Activated T-helper 1 cell treated with anti-CD3 and anti-CD28 coated beads, Interleukin-12 subunit alpha, Interleukin-12 subunit beta, Interleukin-2, Interleukin-4 antibody, amounts not matched to agents 30 ng/mL and 10 ng/mL and 1 ng/mL, durations not matched to agents 14 hours and 24 hours and 36 hours (primary cell): ENCODE measurements at regions of chr22 and their contacts with region 1.

Region 1: GRCh38 chr22:41381329-41382097 is at the start of gene TEF:
- DNase-seq: peak; percentile 97
- H3K4me3 Mint-ChIP-seq: peak within 1 kb of the TSS; percentile 85
- H3K27ac Mint-ChIP-seq: peak within 1 kb of the TSS; percentile 93
- H3K4me1 Mint-ChIP-seq: peaks cover 6% of the 10 kb centered on the region
- H3K27me3 Mint-ChIP-seq: no peaks in the 10 kb centered on the region
- total RNA-seq, gene TEF: 1.6 and 2.1 TPM in 2 replicates

Region 2: DNA sequence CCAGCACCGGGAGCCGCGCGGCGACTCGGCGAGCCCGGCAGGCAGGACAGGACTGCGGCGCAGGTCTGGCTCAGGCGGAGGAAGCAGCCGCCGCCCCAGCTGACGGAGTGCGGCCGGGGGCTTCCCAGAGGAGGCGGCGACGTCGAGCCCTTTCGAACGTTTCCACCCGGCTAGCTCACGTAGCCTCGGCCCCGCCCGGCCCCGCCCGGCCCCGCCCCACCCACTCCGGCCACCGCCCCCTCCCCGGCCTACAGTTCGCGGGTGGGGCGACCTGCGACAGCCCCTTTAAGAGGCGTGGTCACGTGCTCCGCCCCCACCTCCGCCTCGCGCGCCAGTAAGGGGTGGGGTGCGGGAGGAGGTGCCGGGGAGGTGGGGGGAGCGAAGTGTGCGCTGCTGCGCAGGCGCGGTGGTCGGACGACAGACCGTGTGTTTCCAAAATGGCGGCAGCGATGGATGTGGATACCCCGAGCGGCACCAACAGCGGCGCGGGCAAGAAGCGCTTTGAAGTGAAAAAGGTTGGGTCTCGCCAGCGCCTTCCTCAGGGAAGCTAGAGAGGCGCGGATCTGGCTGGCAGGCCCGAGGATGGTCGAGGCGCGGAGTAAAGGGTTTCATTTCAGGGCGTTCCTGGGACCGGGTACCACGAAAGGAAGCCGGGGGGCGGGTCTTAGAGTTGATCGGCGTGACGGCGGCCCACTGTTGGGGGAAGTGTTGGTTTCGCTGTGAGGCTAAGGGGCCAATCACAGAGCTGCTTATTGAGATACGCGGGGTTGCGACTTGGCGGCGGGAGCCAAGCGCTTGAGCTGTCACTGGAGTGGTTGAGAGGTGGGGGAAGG is 430.3 kb before region 1 on chr22 and contains the start of gene RBX1:
- intact Hi-C with region 1: loop called (anchors 1 kb)
- DNase-seq: peak; percentile 98
- H3K4me3 Mint-ChIP-seq: peak within 1 kb of the TSS; percentile 98
- H3K27ac Mint-ChIP-seq: peak within 1 kb of the TSS; percentile 98
- H3K4me1 Mint-ChIP-seq: peaks cover 33% of the 10 kb centered on the region
- H3K27me3 Mint-ChIP-seq: no peaks in the 10 kb centered on the region
- total RNA-seq, gene RBX1: 90.9 and 94.4 TPM in 2 replicates

Region 3: GRCh38 chr22:41301105-41302020 is 80.2 kb before region 1 on chr22 and contains the start of gene ZC3H7B:
- intact Hi-C with region 1: loop called (anchors 1 kb)
- DNase-seq: peak; percentile 81
- H3K4me3 Mint-ChIP-seq: peak within 1 kb of the TSS; percentile 87
- H3K27ac Mint-ChIP-seq: peak within 1 kb of the TSS; percentile 82
- H3K4me1 Mint-ChIP-seq: peaks cover 36% of the 10 kb centered on the region
- H3K27me3 Mint-ChIP-seq: no peaks in the 10 kb centered on the region
- total RNA-seq, gene ZC3H7B: 77.1 and 79.0 TPM in 2 replicates

Region 4: GRCh38 chr22:41589391-41590241 is 208.1 kb after region 1 on chr22 and contains the start of gene PMM1:
- intact Hi-C with region 1: loop called (anchors 1 kb)
- DNase-seq: peak; percentile 100
- H3K4me3 Mint-ChIP-seq: peak within 1 kb of the TSS; percentile 92
- H3K27ac Mint-ChIP-seq: peak within 1 kb of the TSS; percentile 82
- H3K4me1 Mint-ChIP-seq: peaks cover 17% of the 10 kb centered on the region
- H3K27me3 Mint-ChIP-seq: no peaks in the 10 kb centered on the region
- total RNA-seq, gene PMM1: 21.4 and 22.6 TPM in 2 replicates

Region 5: GRCh38 chr22:41688365-41689211 is 307.1 kb after region 1 on chr22 and contains the start of gene SNU13:
- intact Hi-C with region 1: loop called (anchors 5 kb)
- DNase-seq: peak; percentile 92
- H3K4me3 Mint-ChIP-seq: peak within 1 kb of the TSS; percentile 98
- H3K27ac Mint-ChIP-seq: peak within 1 kb of the TSS; percentile 98
- H3K4me1 Mint-ChIP-seq: peaks cover 17% of the 10 kb centered on the region
- H3K27me3 Mint-ChIP-seq: no peaks in the 10 kb centered on the region
- total RNA-seq, gene SNU13: 337 and 339 TPM in 2 replicates